Gastrocnemius medialis (tissue), 4 donors: ENCODE measurements at regions of chr5 and their contacts with region 1.

Region 1: DNA sequence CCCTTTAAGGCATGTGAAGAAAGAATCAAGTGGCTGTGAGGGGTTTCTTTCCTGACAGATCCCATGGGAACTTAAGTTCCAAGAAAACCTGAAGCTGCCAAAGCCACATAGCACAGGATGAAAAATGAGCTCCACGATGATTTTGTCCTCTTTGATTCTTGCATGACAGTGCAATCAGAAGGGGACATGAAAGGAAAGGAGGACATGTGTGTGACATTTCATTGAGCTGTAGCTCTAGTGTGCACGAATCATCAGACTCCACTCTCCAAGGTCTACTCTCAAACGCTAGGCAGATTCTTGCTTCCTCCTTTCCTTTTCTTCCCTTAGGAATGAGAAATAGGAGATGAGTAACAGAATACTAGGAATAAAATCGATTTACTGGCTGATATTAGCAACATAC is 142.0 kb downstream of the ZNF608 start:
- DNase-seq: no peak
- ATAC-seq: peak in 1 of 2 donors; percentile 24
- H3K4me3 ChIP-seq: no peak overlapping the region
- H3K27ac ChIP-seq: no peak overlapping the region
- H3K4me1 ChIP-seq: peaks cover 22 to 34% of the 10 kb centered on the region in 2 donors
- H3K27me3 ChIP-seq: no peaks in the 10 kb centered on the region
- CTCF ChIP-seq: no peak
- POLR2A ChIP-seq: no peak

Region 2: GRCh38 chr5:124034963-124035362 is 569.5 kb before region 1 on chr5:
- in situ Hi-C with region 1: no loop called
- intact Hi-C with region 1: no loop called
- DNase-seq: no peak
- ATAC-seq: no peak
- H3K4me3 ChIP-seq: no peak overlapping the region
- H3K27ac ChIP-seq: no peak overlapping the region
- H3K4me1 ChIP-seq: no peaks in the 10 kb centered on the region
- H3K27me3 ChIP-seq: no peaks in the 10 kb centered on the region
- CTCF ChIP-seq: no peak
- POLR2A ChIP-seq: no peak

Region 3: DNA sequence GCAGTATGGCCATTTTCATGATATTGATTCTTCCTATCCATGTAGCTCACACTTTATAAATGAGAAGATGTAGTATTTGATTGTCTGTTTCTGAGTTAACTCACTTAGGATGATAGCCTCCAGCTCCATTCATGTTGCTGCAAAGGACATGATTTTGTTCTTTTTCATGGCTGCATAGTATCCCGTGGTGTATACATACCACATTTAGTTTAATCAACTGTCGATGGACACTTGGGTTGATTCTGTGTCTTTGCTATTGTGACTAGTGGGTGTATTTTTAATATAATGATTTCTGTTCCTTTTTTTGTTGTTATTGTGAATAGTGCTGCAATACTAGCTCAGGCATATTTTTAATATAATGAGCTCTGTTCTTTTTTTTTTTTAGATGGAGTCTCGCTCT is 702.3 kb after region 1 on chr5:
- in situ Hi-C with region 1: no loop called
- intact Hi-C with region 1: loop called (anchors 5 kb)
- DNase-seq: no peak
- ATAC-seq: no peak
- H3K4me3 ChIP-seq: no peak overlapping the region
- H3K27ac ChIP-seq: no peak overlapping the region
- H3K4me1 ChIP-seq: no peaks in the 10 kb centered on the region
- H3K27me3 ChIP-seq: no peaks in the 10 kb centered on the region
- CTCF ChIP-seq: no peak
- POLR2A ChIP-seq: no peak